ENCODE measurements at regions of chr1 and their contacts with region 1.

Region 1: GRCh38 chr1:223683586-223684487 is 18.3 kb upstream of the CAPN8 start:
- DNase-seq: peak; percentile 37 to 68
- ATAC-seq: peak; percentile 56 to 85 (median 78)
- H3K4me3 ChIP-seq: no peak overlapping the region
- H3K27ac ChIP-seq: no peak overlapping the region
- H3K4me1 ChIP-seq: no peaks in the 10 kb centered on the region
- H3K27me3 ChIP-seq: no peaks in the 10 kb centered on the region
- CTCF ChIP-seq: peak; percentile 70

Region 2: GRCh38 chr1:223133824-223134435 is 549.9 kb before region 1 on chr1:
- intact Hi-C with region 1: loop called (anchors 2 to 5 kb)
- DNase-seq: peak; percentile 84 to 91
- ATAC-seq: peak; percentile 83 to 89 (median 84)
- H3K4me3 ChIP-seq: peak overlapping the region; percentile 57
- H3K27ac ChIP-seq: peak overlapping the region; percentile 64
- H3K4me1 ChIP-seq: peaks cover 34% of the 10 kb centered on the region
- H3K27me3 ChIP-seq: no peaks in the 10 kb centered on the region
- CTCF ChIP-seq: peak; percentile 89

Region 3: DNA sequence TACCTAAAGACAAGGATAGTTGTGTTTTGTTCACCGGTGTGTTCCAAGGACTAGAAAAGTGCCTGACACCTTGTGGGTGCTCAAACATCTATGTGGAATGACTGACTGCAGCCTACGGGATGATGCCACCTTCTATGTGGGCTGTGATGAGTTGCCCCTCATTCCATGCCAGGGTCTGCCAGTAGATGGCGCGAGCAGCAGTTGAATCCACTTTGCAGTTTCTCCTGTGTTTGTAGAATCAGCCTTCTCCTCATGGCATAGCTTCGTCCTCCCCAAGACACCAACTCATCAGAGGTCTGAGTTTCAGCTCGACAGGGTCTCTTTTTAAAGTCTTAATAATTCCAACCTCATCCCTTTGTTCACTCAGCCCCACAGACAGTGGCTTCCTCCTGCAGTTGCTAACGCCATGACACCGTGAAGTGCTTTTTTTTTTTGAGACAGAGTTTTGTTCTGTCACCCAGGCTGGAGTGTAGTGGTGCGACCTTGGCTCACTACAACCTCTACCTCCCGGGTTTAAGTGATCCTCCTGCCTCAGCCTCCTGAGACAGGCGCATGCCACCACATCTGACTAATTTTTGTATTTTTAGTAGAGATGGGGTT is 152.0 kb before region 1 on chr1:
- intact Hi-C with region 1: loop called (anchors 5 kb)
- DNase-seq: peak; percentile 55 to 74
- ATAC-seq: peak; percentile 37 to 84 (median 76)
- H3K4me3 ChIP-seq: no peak overlapping the region
- H3K27ac ChIP-seq: no peak overlapping the region
- H3K4me1 ChIP-seq: no peaks in the 10 kb centered on the region
- H3K27me3 ChIP-seq: peaks cover 0 to 5% (median 0%) of the 10 kb centered on the region in 3 donors
- CTCF ChIP-seq: peak; percentile 48

Region 4: GRCh38 chr1:223652436-223652941 is 31.3 kb before region 1 on chr1:
- intact Hi-C with region 1: no loop called
- DNase-seq: no peak
- ATAC-seq: peak in 3 of 4 donors; percentile 54 to 59 (median 55)
- H3K4me3 ChIP-seq: no peak overlapping the region
- H3K27ac ChIP-seq: no peak overlapping the region
- H3K4me1 ChIP-seq: peaks cover 23% of the 10 kb centered on the region
- H3K27me3 ChIP-seq: no peaks in the 10 kb centered on the region
- CTCF ChIP-seq: no peak

Region 5: GRCh38 chr1:223665552-223666312 is 18.1 kb before region 1 on chr1 and contains the start of gene CAPN8:
- intact Hi-C with region 1: no loop called
- DNase-seq: no peak
- ATAC-seq: no peak
- H3K4me3 ChIP-seq: no peak within 1 kb of the TSS
- H3K27ac ChIP-seq: no peak within 1 kb of the TSS
- H3K4me1 ChIP-seq: no peaks in the 10 kb centered on the region
- H3K27me3 ChIP-seq: no peaks in the 10 kb centered on the region
- CTCF ChIP-seq: no peak
- total RNA-seq, gene CAPN8: 0.78 to 5.4 (median 2.1) TPM in 3 of 4 donors, not detected in the other

Region 6: GRCh38 chr1:223716302-223716862 is 32.5 kb after region 1 on chr1:
- intact Hi-C with region 1: no loop called
- DNase-seq: no peak
- ATAC-seq: no peak
- H3K4me3 ChIP-seq: peak overlapping the region; percentile 33
- H3K27ac ChIP-seq: peak overlapping the region; percentile 96
- H3K4me1 ChIP-seq: peaks cover 51% of the 10 kb centered on the region
- H3K27me3 ChIP-seq: no peaks in the 10 kb centered on the region
- CTCF ChIP-seq: no peak